Heart left ventricle (tissue), 16 donors: ENCODE measurements at regions of chr7 and their contacts with region 1.

Region 1: DNA sequence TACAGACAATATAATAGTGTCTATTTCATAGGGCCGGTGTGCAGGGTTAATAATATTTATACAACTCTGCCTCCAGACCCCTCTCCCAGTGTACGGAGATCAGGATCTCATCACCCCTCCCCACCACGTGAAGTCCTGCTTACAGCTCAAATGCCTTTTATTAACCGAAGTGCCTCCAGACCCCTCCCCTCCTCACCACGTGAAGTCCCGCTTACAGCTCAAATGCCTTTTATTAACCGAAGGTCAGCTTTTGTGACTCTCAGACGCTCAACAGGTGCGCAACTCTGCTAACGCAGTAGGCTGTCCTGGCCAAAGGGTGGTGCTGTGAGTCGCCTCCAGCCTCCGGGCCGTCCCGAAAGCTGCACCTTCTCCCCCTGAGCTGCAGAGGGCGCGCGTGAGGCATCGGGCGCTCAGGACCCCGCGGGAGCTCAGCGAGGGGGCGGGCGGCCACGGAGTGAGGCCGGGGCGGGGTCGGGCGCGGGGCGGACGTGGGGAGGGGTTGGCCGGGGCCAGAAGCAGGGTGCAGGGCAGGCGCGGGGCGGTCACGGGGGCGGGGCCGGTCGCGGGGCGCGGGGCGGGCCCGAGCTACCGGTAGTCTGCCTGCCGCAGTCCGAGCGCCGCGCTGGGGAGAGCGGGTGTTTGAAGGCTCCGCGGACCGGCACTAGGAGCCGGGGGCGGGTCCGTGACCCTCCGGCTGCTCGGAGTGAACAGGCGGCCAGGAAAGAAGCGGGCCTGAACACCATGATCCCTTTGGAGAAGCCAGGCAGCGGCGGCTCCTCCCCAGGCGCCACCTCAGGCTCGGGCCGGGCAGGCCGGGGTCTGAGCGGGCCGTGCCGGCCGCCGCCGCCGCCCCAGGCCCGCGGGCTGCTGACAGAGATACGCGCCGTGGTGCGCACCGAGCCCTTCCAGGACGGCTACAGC is at the start of gene STK17A:
- DNase-seq: peak; percentile 92 to 96 (median 92)
- ATAC-seq: peak; percentile 92 to 99 (median 94)
- H3K4me3 ChIP-seq: peak within 1 kb of the TSS; percentile 79 to 100 (median 92)
- H3K27ac ChIP-seq: peak within 1 kb of the TSS; percentile 67 to 99 (median 93)
- H3K4me1 ChIP-seq: peaks cover 0 to 34% (median 16%) of the 10 kb centered on the region in 12 donors
- H3K27me3 ChIP-seq: peaks cover 0 to 11% (median 0%) of the 10 kb centered on the region in 9 donors
- CTCF ChIP-seq: peak; percentile 90 to 99 (median 94)
- POLR2A ChIP-seq: peak in 1 of 2 donors; percentile 92
- total RNA-seq, gene STK17A: 18.7 to 43.9 (median 26.6) TPM

Region 2: GRCh38 chr7:43396187-43396740 is 186.5 kb before region 1 on chr7:
- intact Hi-C with region 1: no loop called
- DNase-seq: no peak
- ATAC-seq: no peak
- H3K4me3 ChIP-seq: no peak overlapping the region
- H3K27ac ChIP-seq: no peak overlapping the region
- H3K4me1 ChIP-seq: no peaks in the 10 kb centered on the region
- H3K27me3 ChIP-seq: peaks cover 0 to 20% (median 4%) of the 10 kb centered on the region in 9 donors
- CTCF ChIP-seq: no peak
- POLR2A ChIP-seq: no peak

Region 3: GRCh38 chr7:43639858-43640491 is 57.2 kb after region 1 on chr7:
- intact Hi-C with region 1: loop called in 4 of 10 experiments (anchors 5 to 10 kb)
- DNase-seq: peak in 4 of 5 donors; percentile 47 to 73 (median 56)
- ATAC-seq: peak; percentile 61 to 93 (median 87)
- H3K4me3 ChIP-seq: no peak overlapping the region
- H3K27ac ChIP-seq: peak overlapping the region; percentile 30 to 72 (median 57)
- H3K4me1 ChIP-seq: peaks cover 0 to 59% (median 18%) of the 10 kb centered on the region in 12 donors
- H3K27me3 ChIP-seq: no peaks in the 10 kb centered on the region
- CTCF ChIP-seq: no peak
- POLR2A ChIP-seq: no peak

Region 4: GRCh38 chr7:43700059-43700501 is 117.3 kb after region 1 on chr7:
- intact Hi-C with region 1: loop called (anchors 1 to 2 kb)
- DNase-seq: no peak
- ATAC-seq: peak in 3 of 4 donors; percentile 44 to 73 (median 72)
- H3K4me3 ChIP-seq: no peak overlapping the region
- H3K27ac ChIP-seq: no peak overlapping the region
- H3K4me1 ChIP-seq: peaks cover 0 to 19% (median 4%) of the 10 kb centered on the region in 12 donors
- H3K27me3 ChIP-seq: no peaks in the 10 kb centered on the region
- CTCF ChIP-seq: peak; percentile 58 to 90 (median 70)
- POLR2A ChIP-seq: no peak

Region 5: DNA sequence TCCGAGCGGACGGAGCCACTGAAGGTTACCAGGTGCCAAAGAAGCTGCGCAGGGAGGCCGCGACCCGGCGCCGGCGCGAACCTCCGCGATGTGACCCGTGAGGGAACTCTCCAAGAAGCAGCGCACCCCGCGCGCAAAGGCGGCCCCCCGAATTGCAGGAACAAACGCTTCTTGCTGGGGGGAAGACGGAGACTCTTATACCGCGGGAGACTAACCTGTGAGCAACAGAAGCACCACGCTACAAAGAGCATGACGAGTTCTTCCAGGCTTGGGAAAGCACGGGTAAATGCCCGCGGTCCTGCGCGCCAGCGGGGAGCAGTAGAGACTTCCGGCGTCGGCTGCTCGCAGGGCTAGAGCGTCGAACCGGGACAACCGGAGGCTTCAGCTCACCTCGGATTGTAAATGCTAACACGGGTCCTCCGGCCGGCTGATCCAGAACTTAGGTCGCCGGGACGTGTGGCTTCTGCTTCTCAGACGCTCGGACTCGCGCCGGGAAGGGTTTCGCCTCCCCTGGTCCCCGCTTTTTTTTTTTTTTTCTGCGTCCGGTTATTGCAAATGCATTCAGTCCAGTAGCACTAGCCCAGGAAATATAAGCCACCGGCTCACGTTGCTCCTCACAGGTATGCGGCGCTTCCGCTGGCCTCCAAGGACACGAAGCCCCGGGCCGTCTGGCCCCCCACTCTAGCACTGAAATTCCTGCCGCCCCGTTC is 146.6 kb after region 1 on chr7 and contains the start of gene COA1:
- intact Hi-C with region 1: loop called in 3 of 10 experiments (anchors 2 to 5 kb)
- DNase-seq: peak; percentile 83 to 91 (median 89)
- ATAC-seq: peak; percentile 98 to 99 (median 99)
- H3K4me3 ChIP-seq: peak within 1 kb of the TSS; percentile 60 to 95 (median 81)
- H3K27ac ChIP-seq: peak within 1 kb of the TSS; percentile 82 to 92 (median 88)
- H3K4me1 ChIP-seq: peaks cover 0 to 42% (median 19%) of the 10 kb centered on the region in 12 donors
- H3K27me3 ChIP-seq: no peaks in the 10 kb centered on the region
- CTCF ChIP-seq: peak in 1 of 12 donors; percentile 19
- POLR2A ChIP-seq: peak in 1 of 2 donors; percentile 57
- total RNA-seq, gene COA1: 57.5 to 81.2 (median 68.2) TPM

Region 6: GRCh38 chr7:43847496-43847895 is 264.7 kb after region 1 on chr7:
- intact Hi-C with region 1: loop called in 1 of 10 experiments (anchors 5 kb)
- DNase-seq: no peak
- ATAC-seq: no peak
- H3K4me3 ChIP-seq: no peak overlapping the region
- H3K27ac ChIP-seq: no peak overlapping the region
- H3K4me1 ChIP-seq: no peaks in the 10 kb centered on the region
- H3K27me3 ChIP-seq: peaks cover 0 to 10% (median 0%) of the 10 kb centered on the region in 9 donors
- CTCF ChIP-seq: no peak
- POLR2A ChIP-seq: no peak